WTC11 (cell line): ENCODE measurements at regions of chr10 and their contacts with region 1.

Region 1: GRCh38 chr10:70348228-70348850 is 34.1 kb downstream of the LRRC20 start:
- DNase-seq: peak; percentile 64
- ATAC-seq: peak; percentile 98
- H3K4me3 Mint-ChIP-seq: no peak overlapping the region
- H3K27ac Mint-ChIP-seq: no peak overlapping the region
- H3K4me1 Mint-ChIP-seq: no peaks in the 10 kb centered on the region
- H3K27me3 Mint-ChIP-seq: no peaks in the 10 kb centered on the region
- CTCF ChIP-seq: no peak; the same call in 1 of the 2 replicates

Region 2: GRCh38 chr10:70212879-70213278 is 135.5 kb before region 1 on chr10:
- CTCF ChIA-PET with region 1: no interaction called
- POLR2A ChIA-PET with region 1: no interaction called
- DNase-seq: no peak
- ATAC-seq: no peak
- H3K4me3 Mint-ChIP-seq: no peak overlapping the region
- H3K27ac Mint-ChIP-seq: no peak overlapping the region
- H3K4me1 Mint-ChIP-seq: no peaks in the 10 kb centered on the region
- H3K27me3 Mint-ChIP-seq: no peaks in the 10 kb centered on the region
- CTCF ChIP-seq: no peak

Region 3: DNA sequence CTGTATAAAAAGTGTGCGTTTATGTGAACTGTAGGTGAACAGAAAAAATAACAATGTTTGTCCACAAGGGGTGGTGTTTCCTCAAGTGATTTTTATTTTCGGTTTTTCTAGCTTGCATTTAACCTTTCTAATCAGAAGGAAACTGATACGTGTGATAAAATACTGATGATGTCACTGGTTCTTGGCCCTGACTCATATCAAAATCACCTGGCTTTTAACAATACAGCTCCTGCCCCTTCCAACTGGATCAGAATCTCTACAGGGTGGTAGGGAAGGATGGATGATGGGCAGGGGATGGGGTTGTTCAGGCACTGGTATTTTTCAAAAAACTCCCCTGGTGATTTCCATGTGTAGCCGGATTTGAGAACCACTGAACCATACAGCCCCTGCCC is 75.4 kb before region 1 on chr10:
- CTCF ChIA-PET with region 1: interaction called, 22 read pairs
- POLR2A ChIA-PET with region 1: no interaction called
- DNase-seq: no peak
- ATAC-seq: no peak
- H3K4me3 Mint-ChIP-seq: no peak overlapping the region
- H3K27ac Mint-ChIP-seq: no peak overlapping the region
- H3K4me1 Mint-ChIP-seq: peaks cover 16% of the 10 kb centered on the region
- H3K27me3 Mint-ChIP-seq: no peaks in the 10 kb centered on the region
- CTCF ChIP-seq: no peak

Region 4: DNA sequence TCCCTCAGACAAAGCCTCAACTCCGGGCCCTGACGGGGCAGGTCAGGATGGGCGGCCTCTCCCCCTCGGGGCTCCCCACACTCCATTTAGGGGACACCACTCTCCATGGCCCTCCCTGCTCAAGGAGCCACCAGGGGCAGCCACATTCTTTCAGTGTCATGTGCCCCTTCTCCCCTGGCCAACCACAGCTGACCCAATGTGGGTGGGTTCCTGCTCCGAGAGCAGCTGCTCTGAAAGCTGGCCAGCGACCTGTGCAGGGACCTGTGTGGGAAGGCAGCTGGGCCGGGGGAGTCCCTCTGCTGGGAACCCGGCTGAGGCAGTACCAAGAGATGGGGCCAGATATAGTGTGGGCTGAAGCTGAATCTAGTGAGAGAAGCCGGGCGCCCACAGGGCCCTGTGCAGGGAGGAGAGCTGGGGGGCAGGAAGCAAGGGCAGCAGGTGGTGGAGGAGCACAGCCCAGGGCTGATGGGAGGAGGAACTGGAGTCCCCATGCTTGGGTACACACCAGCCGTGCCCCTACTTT is 23.9 kb before region 1 on chr10:
- CTCF ChIA-PET with region 1: interaction called, 11 read pairs
- POLR2A ChIA-PET with region 1: no interaction called
- DNase-seq: peak; percentile 44
- ATAC-seq: peak; percentile 47
- H3K4me3 Mint-ChIP-seq: no peak overlapping the region
- H3K27ac Mint-ChIP-seq: no peak overlapping the region
- H3K4me1 Mint-ChIP-seq: peaks cover 17% of the 10 kb centered on the region
- H3K27me3 Mint-ChIP-seq: no peaks in the 10 kb centered on the region
- CTCF ChIP-seq: no peak